ENCODE measurements at regions of chr3 and their contacts with region 1.

Region 1: DNA sequence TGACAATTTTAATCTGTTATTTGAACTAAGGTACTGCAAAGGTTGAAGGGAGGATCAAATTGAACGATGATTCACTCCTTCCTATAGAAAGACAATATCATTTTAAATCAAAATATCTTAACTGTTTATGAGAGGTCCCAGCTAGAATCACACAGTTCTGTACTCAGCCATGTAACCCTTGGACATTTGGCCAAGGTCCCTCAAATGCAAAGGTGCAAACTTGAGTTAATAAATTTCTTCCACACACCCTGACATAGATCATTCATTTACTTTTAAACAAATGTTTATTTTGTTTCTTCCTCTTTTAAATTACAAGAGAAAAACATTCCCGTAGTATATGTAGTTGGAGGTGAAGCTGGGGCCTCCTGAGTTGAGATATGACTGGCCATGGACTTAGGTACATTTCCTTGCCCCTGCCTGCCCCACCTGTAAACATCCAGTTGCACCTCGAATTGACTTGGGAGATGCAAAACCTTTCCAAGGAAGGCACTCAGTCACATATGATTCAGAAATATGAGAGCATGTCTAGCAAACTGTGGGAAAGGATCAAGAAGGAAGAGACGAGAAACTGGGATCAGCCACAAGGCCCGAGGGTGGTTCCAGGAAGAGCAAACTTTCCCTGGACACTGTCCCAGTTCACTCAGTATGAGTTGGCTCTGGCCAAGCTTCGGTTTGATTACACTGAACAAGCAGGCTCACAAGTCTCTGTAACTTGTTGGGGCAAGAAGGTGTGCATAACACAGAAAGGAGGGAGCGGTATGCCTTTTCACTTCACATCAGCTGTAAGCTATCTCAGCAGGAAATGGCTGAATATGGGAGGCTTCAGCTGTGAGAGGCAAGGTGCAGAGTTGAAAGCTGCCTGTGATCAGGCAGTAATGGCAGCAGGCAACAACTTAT is 6.7 kb downstream of the TNFSF10 start:
- DNase-seq: peak; percentile 29
- H3K4me3 ChIP-seq: peak overlapping the region; percentile 30
- H3K27ac ChIP-seq: peak overlapping the region; percentile 86
- H3K4me1 ChIP-seq: peaks cover 82% of the 10 kb centered on the region
- H3K27me3 ChIP-seq: no peaks in the 10 kb centered on the region
- CTCF ChIP-seq: no peak

Region 2: DNA sequence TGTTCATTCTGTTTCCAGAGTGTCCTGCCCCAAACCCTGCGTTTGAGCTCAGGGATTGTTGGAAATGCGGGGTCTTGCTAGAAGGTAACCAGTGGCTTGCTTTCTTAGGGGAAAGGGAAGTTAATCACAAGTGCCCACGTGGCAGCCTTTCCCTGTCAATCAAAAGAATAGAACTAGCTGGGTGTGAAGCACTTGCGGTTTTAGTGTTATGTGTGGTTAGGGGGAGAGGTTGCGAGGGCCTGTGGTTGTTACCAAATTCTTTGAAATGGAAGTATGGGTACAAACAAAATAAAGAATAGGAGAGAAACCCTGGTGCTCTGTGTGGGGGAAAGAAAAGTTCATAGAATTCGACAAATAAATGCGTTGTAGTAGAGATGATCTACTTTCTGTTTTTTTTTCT is 409.6 kb before region 1 on chr3:
- intact Hi-C with region 1: no loop called
- DNase-seq: no peak
- H3K4me3 ChIP-seq: no peak overlapping the region
- H3K27ac ChIP-seq: peak overlapping the region; percentile 31
- H3K4me1 ChIP-seq: peaks cover 70% of the 10 kb centered on the region
- H3K27me3 ChIP-seq: no peaks in the 10 kb centered on the region
- CTCF ChIP-seq: no peak

Region 3: DNA sequence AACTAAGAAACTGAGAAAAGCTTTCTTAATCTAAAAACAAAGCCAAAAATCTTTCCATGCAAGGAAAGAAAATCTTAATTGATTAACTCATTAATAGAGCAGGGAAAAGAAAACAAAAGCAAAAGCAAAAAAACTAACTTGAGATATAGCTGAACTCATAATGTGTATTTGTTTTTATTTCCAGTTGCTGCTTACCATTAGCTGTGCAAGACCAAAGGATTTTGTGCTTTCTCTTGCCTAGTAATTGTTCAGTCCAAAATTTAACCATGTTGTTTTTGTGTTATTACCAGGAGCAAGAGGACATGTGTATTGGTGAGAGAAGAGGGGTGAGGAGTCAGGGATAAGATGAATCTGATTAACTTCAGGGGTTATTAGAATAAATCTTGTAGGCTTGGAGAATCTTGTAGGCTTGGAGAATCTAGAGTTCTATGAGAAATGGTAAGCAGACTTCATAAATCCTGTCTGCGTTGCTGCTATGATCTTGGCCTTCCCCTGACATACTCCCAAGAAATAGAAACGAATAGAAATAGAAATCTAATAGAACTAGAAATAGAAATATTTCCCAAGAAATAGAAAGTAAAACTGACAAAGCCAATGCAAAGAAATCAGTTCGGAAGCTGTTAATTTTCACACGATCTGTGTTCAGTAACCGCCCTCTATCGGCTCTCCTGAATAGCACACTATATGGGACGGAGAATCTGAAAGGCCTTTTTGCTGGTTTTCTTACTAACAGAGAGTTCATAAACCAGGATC is 79.3 kb after region 1 on chr3:
- intact Hi-C with region 1: loop called (anchors 5 kb)
- DNase-seq: no peak
- H3K4me3 ChIP-seq: peak overlapping the region; percentile 57
- H3K27ac ChIP-seq: peak overlapping the region; percentile 91
- H3K4me1 ChIP-seq: peaks cover 27% of the 10 kb centered on the region
- H3K27me3 ChIP-seq: no peaks in the 10 kb centered on the region
- CTCF ChIP-seq: peak; percentile 87